Right cardiac atrium (tissue), 5 donors: ENCODE measurements at regions of chr1 and their contacts with region 1.

Region 1: GRCh38 chr1:147494998-147495580 is 46.2 kb upstream of the BCL9 start:
- DNase-seq: peak; percentile 82 to 87 (median 82)
- ATAC-seq: peak; percentile 94
- H3K4me3 ChIP-seq: no peak overlapping the region
- H3K27ac ChIP-seq: no peak overlapping the region
- H3K4me1 ChIP-seq: peaks cover 4% of the 10 kb centered on the region
- H3K27me3 ChIP-seq: no peaks in the 10 kb centered on the region

Region 2: GRCh38 chr1:147539112-147539575 is 44.1 kb after region 1 on chr1:
- intact Hi-C with region 1: loop called in 1 of 4 experiments (anchors 5 kb)
- DNase-seq: no peak
- ATAC-seq: peak in 1 of 2 donors; percentile 79
- H3K4me3 ChIP-seq: no peak overlapping the region
- H3K27ac ChIP-seq: peak overlapping the region; percentile 43
- H3K4me1 ChIP-seq: no peaks in the 10 kb centered on the region
- H3K27me3 ChIP-seq: no peaks in the 10 kb centered on the region

Region 3: DNA sequence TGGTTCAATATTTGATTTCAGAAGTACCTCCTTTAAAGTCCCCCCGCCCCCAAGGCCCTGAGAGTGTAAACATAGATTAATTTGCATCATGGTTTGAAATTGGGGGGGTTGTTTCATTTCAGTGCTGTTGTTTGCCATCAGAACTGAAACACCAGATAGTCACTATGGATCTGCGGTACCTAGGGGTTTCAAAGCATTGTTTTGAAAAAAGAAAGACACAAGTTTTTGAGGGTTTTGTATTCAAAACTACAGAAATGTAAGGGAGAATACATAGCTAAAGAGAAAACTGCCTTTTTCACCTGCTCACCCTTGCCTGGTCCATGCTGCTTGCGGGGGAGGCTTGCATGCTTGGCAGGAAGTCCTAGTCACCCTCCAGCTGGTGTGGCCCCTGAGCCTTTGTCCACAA is 115.9 kb after region 1 on chr1:
- intact Hi-C with region 1: no loop called
- DNase-seq: no peak
- ATAC-seq: no peak
- H3K4me3 ChIP-seq: no peak overlapping the region
- H3K27ac ChIP-seq: no peak overlapping the region
- H3K4me1 ChIP-seq: peaks cover 4% of the 10 kb centered on the region
- H3K27me3 ChIP-seq: no peaks in the 10 kb centered on the region

Region 4: GRCh38 chr1:147627435-147628110 is 132.5 kb after region 1 on chr1:
- intact Hi-C with region 1: loop called (anchors 5 kb)
- DNase-seq: peak; percentile 57 to 79 (median 67)
- ATAC-seq: peak; percentile 80 to 84
- H3K4me3 ChIP-seq: no peak overlapping the region
- H3K27ac ChIP-seq: no peak overlapping the region
- H3K4me1 ChIP-seq: no peaks in the 10 kb centered on the region
- H3K27me3 ChIP-seq: no peaks in the 10 kb centered on the region

Region 5: GRCh38 chr1:147640553-147641165 is 145.6 kb after region 1 on chr1:
- intact Hi-C with region 1: loop called in 1 of 4 experiments (anchors 5 kb)
- DNase-seq: peak; percentile 69 to 83 (median 81)
- ATAC-seq: peak; percentile 76 to 91
- H3K4me3 ChIP-seq: no peak overlapping the region
- H3K27ac ChIP-seq: no peak overlapping the region
- H3K4me1 ChIP-seq: no peaks in the 10 kb centered on the region
- H3K27me3 ChIP-seq: no peaks in the 10 kb centered on the region